CD8-positive, alpha-beta T cell (primary cell): ENCODE measurements at regions of chr10 and their contacts with region 1.

Region 1: DNA sequence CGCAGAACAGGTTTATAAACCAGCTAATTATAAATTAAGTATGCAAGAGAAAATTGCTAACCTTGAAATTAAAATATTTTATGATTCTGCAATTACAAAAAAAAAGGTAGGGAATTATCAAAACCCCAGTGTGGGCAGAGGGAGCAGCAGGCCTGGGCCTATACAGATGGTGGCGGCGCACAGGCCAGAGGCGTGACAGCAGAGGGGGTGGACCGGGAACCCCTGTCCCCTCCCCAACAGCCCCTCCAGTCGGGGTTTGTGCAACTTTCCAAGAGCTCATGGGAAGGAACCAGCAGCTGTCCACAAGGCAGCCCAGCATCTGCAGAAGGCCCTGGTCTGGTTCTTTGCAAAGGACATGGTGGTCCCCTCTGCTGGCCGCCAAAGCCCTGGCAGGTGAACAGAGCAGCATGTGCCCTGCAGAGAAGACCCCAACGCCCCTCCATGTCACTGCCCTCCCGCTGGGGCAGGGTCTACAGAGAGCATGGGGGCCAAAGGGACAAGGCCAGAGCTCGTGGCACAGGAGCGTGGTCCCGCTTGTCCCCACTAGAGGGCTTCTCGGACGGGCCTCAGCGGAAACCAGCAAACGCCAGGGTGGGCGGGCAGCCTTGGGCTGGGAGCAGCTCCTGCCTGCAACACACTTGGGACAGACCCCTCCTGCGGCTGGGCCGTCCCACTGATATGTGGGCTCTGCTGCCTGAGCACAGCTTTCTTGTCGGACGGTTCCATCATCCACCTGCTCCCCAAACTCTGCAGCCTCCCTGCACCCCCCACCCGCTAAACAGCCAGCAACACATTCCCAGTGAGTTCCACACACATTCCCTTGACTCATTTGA is 75.1 kb downstream of the EBF3 start:
- DNase-seq: peak; percentile 6 to 60 (median 37)
- ATAC-seq: peak; percentile 54
- H3K4me3 ChIP-seq: no peak overlapping the region
- H3K4me3 Mint-ChIP-seq: no peak overlapping the region
- H3K27ac ChIP-seq: no peak overlapping the region
- H3K27ac Mint-ChIP-seq: no peak overlapping the region
- H3K4me1 ChIP-seq: no peaks in the 10 kb centered on the region
- H3K4me1 Mint-ChIP-seq: no peaks in the 10 kb centered on the region
- H3K27me3 ChIP-seq: no peaks in the 10 kb centered on the region
- H3K27me3 Mint-ChIP-seq: no peaks in the 10 kb centered on the region
- CTCF ChIP-seq: peak; percentile 54

Region 2: DNA sequence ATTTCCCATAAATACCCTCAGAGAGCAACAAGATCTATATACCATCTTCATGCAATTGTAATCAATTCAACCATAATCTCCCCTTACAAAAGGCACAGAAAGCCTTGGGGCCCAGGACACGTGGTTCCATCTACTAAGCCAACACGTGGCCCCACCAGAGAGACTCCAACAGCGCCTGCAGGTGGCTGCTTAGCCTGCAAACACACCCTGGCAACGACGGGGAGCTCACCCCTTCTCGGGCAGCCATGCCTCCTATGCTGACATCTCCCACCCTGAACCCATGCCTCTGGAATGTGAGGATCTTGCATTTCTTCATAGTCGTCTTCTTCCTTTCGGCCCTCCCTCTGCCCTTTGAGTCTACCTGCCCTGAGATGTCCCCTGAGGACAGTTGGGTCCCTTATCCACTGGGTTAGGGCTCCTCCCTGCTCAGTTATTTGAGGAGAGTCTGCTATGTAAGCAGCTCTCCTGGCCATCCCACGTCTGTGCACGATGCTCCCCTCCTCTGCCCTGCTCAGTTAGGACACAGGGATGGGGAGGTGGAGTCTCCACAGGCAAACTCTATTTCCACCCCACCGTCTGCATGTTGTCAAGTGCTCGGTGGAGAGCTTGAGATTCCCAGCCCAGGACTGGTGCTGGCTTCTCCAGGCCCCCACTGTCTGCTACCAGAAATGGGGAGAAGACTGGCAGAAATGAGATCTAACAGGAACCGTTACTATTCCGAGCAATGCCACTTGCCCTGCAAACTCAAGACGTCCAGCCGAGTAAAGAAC is 38.5 kb after region 1 on chr10:
- CTCF ChIA-PET with region 1: no interaction called
- POLR2A ChIA-PET with region 1: no interaction called
- intact Hi-C with region 1: no loop called
- DNase-seq: no peak
- ATAC-seq: no peak
- H3K4me3 ChIP-seq: no peak overlapping the region
- H3K4me3 Mint-ChIP-seq: no peak overlapping the region
- H3K27ac ChIP-seq: no peak overlapping the region
- H3K27ac Mint-ChIP-seq: no peak overlapping the region
- H3K4me1 ChIP-seq: no peaks in the 10 kb centered on the region
- H3K4me1 Mint-ChIP-seq: no peaks in the 10 kb centered on the region
- H3K27me3 ChIP-seq: no peaks in the 10 kb centered on the region
- H3K27me3 Mint-ChIP-seq: no peaks in the 10 kb centered on the region
- CTCF ChIP-seq: no peak

Region 3: GRCh38 chr10:130179640-130180039 is 290.6 kb after region 1 on chr10:
- CTCF ChIA-PET with region 1: interaction called, 3 read pairs
- POLR2A ChIA-PET with region 1: no interaction called
- intact Hi-C with region 1: loop called in 1 of 2 experiments (anchors 2 kb)
- DNase-seq: peak in 7 of 9 experiments; percentile 23 to 63 (median 37)
- ATAC-seq: peak; percentile 85
- H3K4me3 ChIP-seq: no peak overlapping the region
- H3K4me3 Mint-ChIP-seq: no peak overlapping the region
- H3K27ac ChIP-seq: no peak overlapping the region
- H3K27ac Mint-ChIP-seq: peak overlapping the region; percentile 41
- H3K4me1 ChIP-seq: no peaks in the 10 kb centered on the region
- H3K4me1 Mint-ChIP-seq: peaks cover 6% of the 10 kb centered on the region
- H3K27me3 ChIP-seq: no peaks in the 10 kb centered on the region
- H3K27me3 Mint-ChIP-seq: no peaks in the 10 kb centered on the region
- CTCF ChIP-seq: peak; percentile 42